Activated CD4-positive, alpha-beta memory T cell treated with anti-CD3 and anti-CD28 coated beads for 36 hours (primary cell): ENCODE measurements at regions of chr11 and their contacts with region 1.

Region 1: GRCh38 chr11:117064275-117064674 is 34.0 kb downstream of the SIK3 start:
- DNase-seq: no peak
- H3K4me3 Mint-ChIP-seq: peak overlapping the region; percentile 34
- H3K27ac Mint-ChIP-seq: peak overlapping the region; percentile 81
- H3K4me1 Mint-ChIP-seq: peaks cover 79% of the 10 kb centered on the region
- H3K27me3 Mint-ChIP-seq: no peaks in the 10 kb centered on the region

Region 2: GRCh38 chr11:116750070-116750718 is 314.1 kb before region 1 on chr11:
- CTCF ChIA-PET with region 1: no interaction called
- POLR2A ChIA-PET with region 1: no interaction called
- intact Hi-C with region 1: no loop called
- DNase-seq: no peak
- H3K4me3 Mint-ChIP-seq: no peak overlapping the region
- H3K27ac Mint-ChIP-seq: no peak overlapping the region
- H3K4me1 Mint-ChIP-seq: no peaks in the 10 kb centered on the region
- H3K27me3 Mint-ChIP-seq: no peaks in the 10 kb centered on the region

Region 3: GRCh38 chr11:117002639-117003299 is 61.5 kb before region 1 on chr11:
- CTCF ChIA-PET with region 1: no interaction called
- POLR2A ChIA-PET with region 1: interaction called, 7 read pairs
- intact Hi-C with region 1: loop called (anchors 2 kb)
- DNase-seq: no peak
- H3K4me3 Mint-ChIP-seq: peak overlapping the region; percentile 16
- H3K27ac Mint-ChIP-seq: peak overlapping the region; percentile 80
- H3K4me1 Mint-ChIP-seq: peaks cover 69% of the 10 kb centered on the region
- H3K27me3 Mint-ChIP-seq: no peaks in the 10 kb centered on the region

Region 4: DNA sequence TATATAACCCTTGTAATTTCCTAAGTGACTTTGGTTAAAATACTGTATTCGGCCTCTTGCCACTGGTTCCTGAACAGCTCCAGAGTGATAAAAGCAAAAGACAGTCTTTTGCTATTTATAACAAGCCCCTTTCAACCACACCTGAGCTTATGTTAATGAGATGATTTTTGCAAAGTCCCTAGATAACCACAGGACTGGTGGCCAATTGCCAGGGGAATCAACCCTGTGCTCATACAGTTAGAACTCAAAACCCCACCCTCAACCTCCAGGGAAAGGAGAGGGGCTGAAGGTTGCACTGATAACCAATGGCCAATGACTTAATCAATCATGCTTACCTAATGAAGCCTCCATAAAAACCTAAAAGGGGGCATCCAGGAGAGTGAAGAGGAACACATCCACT is 44.0 kb before region 1 on chr11:
- CTCF ChIA-PET with region 1: interaction called, 7 read pairs
- POLR2A ChIA-PET with region 1: interaction called, 11 read pairs
- intact Hi-C with region 1: loop called (anchors 1 kb)
- DNase-seq: peak; percentile 65
- H3K4me3 Mint-ChIP-seq: no peak overlapping the region
- H3K27ac Mint-ChIP-seq: peak overlapping the region; percentile 11
- H3K4me1 Mint-ChIP-seq: peaks cover 67% of the 10 kb centered on the region
- H3K27me3 Mint-ChIP-seq: no peaks in the 10 kb centered on the region

Region 5: GRCh38 chr11:117039900-117040299 is 24.4 kb before region 1 on chr11:
- CTCF ChIA-PET with region 1: interaction called, 5 read pairs
- POLR2A ChIA-PET with region 1: interaction called, 6 read pairs
- intact Hi-C with region 1: loop called (anchors 2 kb)
- DNase-seq: peak; percentile 59
- H3K4me3 Mint-ChIP-seq: no peak overlapping the region
- H3K27ac Mint-ChIP-seq: no peak overlapping the region
- H3K4me1 Mint-ChIP-seq: peaks cover 75% of the 10 kb centered on the region
- H3K27me3 Mint-ChIP-seq: no peaks in the 10 kb centered on the region

Region 6: DNA sequence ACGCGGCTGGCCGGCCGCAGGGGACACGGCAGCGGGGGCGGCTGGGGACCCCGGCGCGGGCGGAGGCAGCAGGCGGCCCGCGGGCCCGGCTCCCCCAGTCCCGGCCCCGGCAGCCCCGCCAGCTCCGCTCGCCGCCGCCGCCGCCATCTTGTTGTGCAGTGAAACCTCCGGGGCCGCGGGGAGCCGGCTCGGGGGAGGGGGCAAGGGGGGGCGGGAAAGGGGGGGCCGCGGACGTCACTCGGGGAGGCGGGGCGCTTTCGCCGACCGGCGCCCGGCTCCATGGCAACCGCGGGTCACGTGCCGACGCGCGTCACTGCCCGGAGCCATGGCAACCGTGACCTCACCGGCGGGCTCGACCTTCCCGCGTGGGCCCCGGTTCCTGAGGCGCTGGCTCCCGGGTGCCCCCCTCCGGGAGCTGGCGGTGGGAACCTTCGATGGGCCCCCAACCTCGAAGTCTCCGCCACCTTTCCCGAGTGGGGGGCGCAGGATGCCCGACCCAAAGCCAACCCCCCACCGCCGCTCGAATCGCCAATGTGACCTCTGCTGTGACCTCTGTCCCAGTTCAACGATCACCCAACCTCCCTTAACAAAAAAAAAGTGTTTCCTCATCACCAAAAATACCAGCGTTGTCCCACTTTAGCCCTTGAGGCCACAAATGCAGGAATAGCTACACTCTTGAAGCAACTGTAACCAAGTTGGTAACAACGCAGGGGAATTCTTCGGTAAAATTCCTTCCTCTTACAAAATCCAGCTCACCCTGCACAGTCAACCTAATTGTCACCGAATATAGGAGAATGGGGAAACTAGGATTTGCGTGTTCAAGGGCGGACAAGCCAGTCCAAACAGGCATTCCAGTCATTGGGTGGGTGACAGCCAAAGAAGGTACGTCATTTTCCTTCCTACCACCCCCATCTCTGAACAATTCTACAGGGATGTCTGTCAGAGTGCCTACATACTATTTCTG is 34.3 kb after region 1 on chr11 and contains the start of gene SIK3:
- CTCF ChIA-PET with region 1: interaction called, 3 read pairs
- POLR2A ChIA-PET with region 1: interaction called, 19 read pairs
- intact Hi-C with region 1: loop called (anchors 1 kb)
- DNase-seq: peak; percentile 94
- H3K4me3 Mint-ChIP-seq: peak within 1 kb of the TSS; percentile 88
- H3K27ac Mint-ChIP-seq: peak within 1 kb of the TSS; percentile 91
- H3K4me1 Mint-ChIP-seq: peaks cover 43% of the 10 kb centered on the region
- H3K27me3 Mint-ChIP-seq: no peaks in the 10 kb centered on the region
- total RNA-seq, gene SIK3: 26.1 to 26.2 TPM

Region 7: GRCh38 chr11:117143390-117143789 is 79.1 kb after region 1 on chr11:
- CTCF ChIA-PET with region 1: no interaction called
- POLR2A ChIA-PET with region 1: no interaction called
- intact Hi-C with region 1: no loop called
- DNase-seq: peak; percentile 39
- H3K4me3 Mint-ChIP-seq: peak overlapping the region; percentile 96
- H3K27ac Mint-ChIP-seq: peak overlapping the region; percentile 90
- H3K4me1 Mint-ChIP-seq: peaks cover 36% of the 10 kb centered on the region
- H3K27me3 Mint-ChIP-seq: no peaks in the 10 kb centered on the region